PC-9 (cell line): ENCODE measurements at regions of chr12 and their contacts with region 1.

Region 1: GRCh38 chr12:25436203-25437030 is 116.7 kb downstream of the LMNTD1 start:
- DNase-seq: peak; percentile 44 to 58
- H3K4me3 ChIP-seq: peak overlapping the region; percentile 45; the same call in 1 of the 2 replicates
- H3K27ac ChIP-seq: no peak overlapping the region
- H3K4me1 ChIP-seq: no peaks in the 10 kb centered on the region
- H3K27me3 ChIP-seq: no peaks in the 10 kb centered on the region
- CTCF ChIP-seq: peak; percentile 93

Region 2: DNA sequence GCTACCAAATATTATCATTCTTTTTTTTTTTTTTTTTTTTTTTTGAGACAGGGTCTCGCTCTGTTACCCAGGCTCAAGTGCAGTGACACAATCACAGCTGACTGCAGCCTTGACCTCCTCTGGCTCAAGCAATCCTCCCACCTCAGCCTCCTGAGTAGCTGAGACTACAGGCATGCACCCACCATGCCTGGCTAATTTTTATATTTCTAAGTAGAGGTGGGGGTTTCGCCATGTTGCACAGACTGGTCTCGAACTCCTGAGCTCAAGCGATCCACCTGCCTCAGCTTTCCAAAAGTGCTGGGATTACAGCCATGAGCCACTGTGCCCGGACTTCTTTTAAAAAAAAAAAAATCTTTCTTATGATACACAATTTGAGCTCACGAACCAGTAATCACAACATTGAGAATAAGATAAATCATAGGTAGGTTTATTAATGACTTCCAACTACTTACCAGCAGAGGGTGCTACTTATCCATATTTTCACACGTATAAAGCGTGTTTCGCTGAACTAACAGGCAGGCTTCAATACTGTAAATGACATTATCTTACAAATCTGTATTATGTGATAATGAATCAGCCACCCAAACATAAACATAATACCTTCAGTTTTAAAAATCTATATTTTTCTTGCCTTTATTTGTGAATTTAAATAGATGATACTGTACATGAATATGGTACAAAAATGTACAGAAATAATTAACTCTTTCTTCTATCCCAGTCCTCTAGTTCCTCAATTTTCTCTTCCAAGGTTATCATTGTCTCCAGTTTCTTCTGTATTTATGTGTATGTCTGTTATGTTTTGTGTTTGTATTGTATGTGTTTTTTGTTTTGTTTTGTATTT is 445.0 kb before region 1 on chr12:
- CTCF ChIA-PET with region 1: no interaction called
- POLR2A ChIA-PET with region 1: no interaction called
- intact Hi-C with region 1: loop called (anchors 5 kb)
- DNase-seq: peak in 1 of 2 experiments; percentile 49
- H3K4me3 ChIP-seq: no peak overlapping the region
- H3K27ac ChIP-seq: no peak overlapping the region
- H3K4me1 ChIP-seq: no peaks in the 10 kb centered on the region
- H3K27me3 ChIP-seq: no peaks in the 10 kb centered on the region
- CTCF ChIP-seq: peak; percentile 82

Region 3: GRCh38 chr12:25557830-25558436 is 121.5 kb after region 1 on chr12:
- CTCF ChIA-PET with region 1: interaction called, 9 read pairs
- POLR2A ChIA-PET with region 1: no interaction called
- intact Hi-C with region 1: loop called (anchors 2 kb)
- DNase-seq: no peak
- H3K4me3 ChIP-seq: no peak overlapping the region
- H3K27ac ChIP-seq: no peak overlapping the region
- H3K4me1 ChIP-seq: no peaks in the 10 kb centered on the region
- H3K27me3 ChIP-seq: no peaks in the 10 kb centered on the region
- CTCF ChIP-seq: peak; percentile 78

Region 4: DNA sequence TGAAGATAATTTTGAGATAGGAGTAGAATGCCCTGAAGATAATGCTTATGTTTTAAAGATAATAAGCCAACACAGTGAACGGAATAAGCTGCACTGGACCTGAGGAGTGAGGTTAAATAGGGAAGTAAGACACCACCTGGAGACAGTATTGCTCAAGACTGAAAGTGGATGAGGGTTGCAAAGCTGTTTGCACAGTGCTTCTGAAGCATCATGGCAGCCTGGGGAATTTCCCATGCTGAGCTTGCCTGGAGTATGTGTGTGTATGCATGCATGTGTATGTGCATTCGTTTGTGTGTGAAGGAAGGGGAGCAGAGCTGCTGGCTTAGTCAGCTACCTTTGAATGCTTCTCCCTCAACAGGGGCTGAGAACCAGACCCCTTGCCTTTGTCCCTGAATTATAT is 652.6 kb after region 1 on chr12:
- CTCF ChIA-PET with region 1: interaction called, 5 read pairs
- POLR2A ChIA-PET with region 1: no interaction called
- intact Hi-C with region 1: loop called (anchors 5 kb)
- DNase-seq: no peak
- H3K4me3 ChIP-seq: no peak overlapping the region
- H3K27ac ChIP-seq: no peak overlapping the region
- H3K4me1 ChIP-seq: peaks cover 29% of the 10 kb centered on the region
- H3K27me3 ChIP-seq: no peaks in the 10 kb centered on the region
- CTCF ChIP-seq: no peak

Region 5: GRCh38 chr12:26701604-26702215 is 1265.3 kb after region 1 on chr12:
- CTCF ChIA-PET with region 1: interaction called, 4 read pairs
- POLR2A ChIA-PET with region 1: no interaction called
- intact Hi-C with region 1: loop called (anchors 2 kb)
- DNase-seq: peak in 1 of 2 experiments; percentile 40
- H3K4me3 ChIP-seq: no peak overlapping the region
- H3K27ac ChIP-seq: no peak overlapping the region
- H3K4me1 ChIP-seq: peaks cover 7% of the 10 kb centered on the region; the same call in 1 of the 2 replicates
- H3K27me3 ChIP-seq: no peaks in the 10 kb centered on the region
- CTCF ChIP-seq: peak; percentile 78

Region 6: DNA sequence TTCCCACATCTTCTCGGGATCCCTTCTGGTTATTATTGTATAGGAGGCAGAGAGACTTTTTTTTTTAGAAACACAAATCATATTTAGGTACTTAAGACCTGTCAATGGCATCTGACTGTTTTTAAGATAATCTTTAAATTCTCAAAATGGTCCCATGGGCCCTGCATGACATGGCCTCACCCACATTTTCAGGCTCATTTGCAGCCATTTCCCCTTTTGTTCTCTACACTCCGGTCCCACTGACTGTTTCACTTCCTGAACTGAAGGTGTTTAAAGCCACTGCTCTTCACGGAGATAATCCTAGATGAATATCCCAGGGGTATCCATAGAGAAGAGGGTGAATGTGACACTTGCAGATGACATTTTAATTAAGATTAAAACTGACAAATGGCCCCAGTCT is 1658.3 kb after region 1 on chr12:
- CTCF ChIA-PET with region 1: no interaction called
- POLR2A ChIA-PET with region 1: no interaction called
- intact Hi-C with region 1: no loop called
- DNase-seq: no peak
- H3K4me3 ChIP-seq: no peak overlapping the region
- H3K27ac ChIP-seq: no peak overlapping the region
- H3K4me1 ChIP-seq: no peaks in the 10 kb centered on the region
- H3K27me3 ChIP-seq: no peaks in the 10 kb centered on the region
- CTCF ChIP-seq: no peak